ENCODE measurements at regions of chr2 and their contacts with region 1.

Region 1: GRCh38 chr2:27281855-27282559 is at the start of gene TRIM54:
- DNase-seq: no peak
- ATAC-seq: no peak
- H3K4me3 ChIP-seq: no peak within 1 kb of the TSS
- H3K4me3 Mint-ChIP-seq: no peak within 1 kb of the TSS
- H3K27ac ChIP-seq: no peak within 1 kb of the TSS
- H3K27ac Mint-ChIP-seq: no peak within 1 kb of the TSS
- H3K4me1 ChIP-seq: no peaks in the 10 kb centered on the region
- H3K4me1 Mint-ChIP-seq: no peaks in the 10 kb centered on the region
- H3K27me3 ChIP-seq: peaks cover 0 to 6% of the 10 kb centered on the region in 2 experiments
- H3K27me3 Mint-ChIP-seq: peaks cover 37% of the 10 kb centered on the region
- CTCF ChIP-seq: no peak
- total RNA-seq, gene TRIM54: not detected

Region 2: DNA sequence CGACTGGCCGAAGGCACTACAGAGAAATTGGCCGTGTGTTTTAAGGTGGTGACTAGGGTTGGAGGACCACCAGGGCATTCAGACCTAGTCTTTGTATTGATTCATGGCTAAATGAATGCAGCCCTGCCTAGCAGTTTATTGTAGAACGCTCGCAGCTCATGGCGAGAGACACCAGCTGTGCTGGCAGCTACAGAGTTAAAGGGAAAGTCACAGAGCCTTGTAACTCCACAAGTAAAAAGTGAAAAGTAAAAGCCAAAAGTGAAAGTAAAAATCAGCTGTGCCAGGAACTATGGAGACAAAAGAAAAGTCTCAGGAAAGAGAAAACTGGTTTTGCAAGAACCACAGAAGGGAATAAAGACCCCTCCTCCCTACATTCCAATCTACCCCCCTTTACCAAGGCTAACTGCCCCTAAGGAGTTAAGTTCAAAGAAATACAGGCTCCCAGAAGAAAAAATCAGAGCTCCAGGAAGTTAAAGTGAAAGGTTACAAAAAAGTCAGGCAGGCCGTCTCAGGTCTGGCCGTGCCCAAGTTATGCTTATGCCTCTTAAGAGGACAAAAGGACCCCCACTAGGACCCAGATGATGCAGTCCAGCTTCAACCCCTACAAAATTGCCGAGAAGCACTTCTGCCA is 982.4 kb before region 1 on chr2:
- CTCF ChIA-PET with region 1: no interaction called
- POLR2A ChIA-PET with region 1: no interaction called
- intact Hi-C with region 1: no loop called
- DNase-seq: peak in 8 of 14 experiments; percentile 9 to 62 (median 40)
- ATAC-seq: peak; percentile 46
- H3K4me3 ChIP-seq: peak overlapping the region; percentile 79
- H3K4me3 Mint-ChIP-seq: no peak overlapping the region
- H3K27ac ChIP-seq: peak overlapping the region; percentile 62 to 65
- H3K27ac Mint-ChIP-seq: no peak overlapping the region
- H3K4me1 ChIP-seq: peaks cover 24% of the 10 kb centered on the region
- H3K4me1 Mint-ChIP-seq: no peaks in the 10 kb centered on the region
- H3K27me3 ChIP-seq: no peaks in the 10 kb centered on the region
- H3K27me3 Mint-ChIP-seq: no peaks in the 10 kb centered on the region
- CTCF ChIP-seq: no peak

Region 3: GRCh38 chr2:26846328-26847306 is 435.4 kb before region 1 on chr2:
- CTCF ChIA-PET with region 1: no interaction called
- POLR2A ChIA-PET with region 1: no interaction called
- intact Hi-C with region 1: loop called in 1 of 2 experiments (anchors 10 kb)
- DNase-seq: peak; percentile 32 to 80 (median 49)
- ATAC-seq: peak; percentile 75
- H3K4me3 ChIP-seq: no peak overlapping the region
- H3K4me3 Mint-ChIP-seq: peak overlapping the region; percentile 87
- H3K27ac ChIP-seq: no peak overlapping the region
- H3K27ac Mint-ChIP-seq: no peak overlapping the region
- H3K4me1 ChIP-seq: peaks cover 36% of the 10 kb centered on the region
- H3K4me1 Mint-ChIP-seq: peaks cover 23% of the 10 kb centered on the region
- H3K27me3 ChIP-seq: peaks cover 46 to 69% of the 10 kb centered on the region in 2 experiments
- H3K27me3 Mint-ChIP-seq: peaks cover 71% of the 10 kb centered on the region
- CTCF ChIP-seq: peak; percentile 81

Region 4: GRCh38 chr2:27095745-27096651 is 186.0 kb before region 1 on chr2:
- CTCF ChIA-PET with region 1: interaction called, 9 read pairs
- POLR2A ChIA-PET with region 1: no interaction called
- intact Hi-C with region 1: loop called in 1 of 2 experiments (anchors 1 kb)
- DNase-seq: peak in 8 of 14 experiments; percentile 19 to 73 (median 46)
- ATAC-seq: peak; percentile 88
- H3K4me3 ChIP-seq: peak overlapping the region; percentile 23
- H3K4me3 Mint-ChIP-seq: peak overlapping the region; percentile 4
- H3K27ac ChIP-seq: no peak overlapping the region
- H3K27ac Mint-ChIP-seq: no peak overlapping the region
- H3K4me1 ChIP-seq: peaks cover 9% of the 10 kb centered on the region
- H3K4me1 Mint-ChIP-seq: peaks cover 11% of the 10 kb centered on the region
- H3K27me3 ChIP-seq: no peaks in the 10 kb centered on the region
- H3K27me3 Mint-ChIP-seq: no peaks in the 10 kb centered on the region
- CTCF ChIP-seq: no peak

Region 5: DNA sequence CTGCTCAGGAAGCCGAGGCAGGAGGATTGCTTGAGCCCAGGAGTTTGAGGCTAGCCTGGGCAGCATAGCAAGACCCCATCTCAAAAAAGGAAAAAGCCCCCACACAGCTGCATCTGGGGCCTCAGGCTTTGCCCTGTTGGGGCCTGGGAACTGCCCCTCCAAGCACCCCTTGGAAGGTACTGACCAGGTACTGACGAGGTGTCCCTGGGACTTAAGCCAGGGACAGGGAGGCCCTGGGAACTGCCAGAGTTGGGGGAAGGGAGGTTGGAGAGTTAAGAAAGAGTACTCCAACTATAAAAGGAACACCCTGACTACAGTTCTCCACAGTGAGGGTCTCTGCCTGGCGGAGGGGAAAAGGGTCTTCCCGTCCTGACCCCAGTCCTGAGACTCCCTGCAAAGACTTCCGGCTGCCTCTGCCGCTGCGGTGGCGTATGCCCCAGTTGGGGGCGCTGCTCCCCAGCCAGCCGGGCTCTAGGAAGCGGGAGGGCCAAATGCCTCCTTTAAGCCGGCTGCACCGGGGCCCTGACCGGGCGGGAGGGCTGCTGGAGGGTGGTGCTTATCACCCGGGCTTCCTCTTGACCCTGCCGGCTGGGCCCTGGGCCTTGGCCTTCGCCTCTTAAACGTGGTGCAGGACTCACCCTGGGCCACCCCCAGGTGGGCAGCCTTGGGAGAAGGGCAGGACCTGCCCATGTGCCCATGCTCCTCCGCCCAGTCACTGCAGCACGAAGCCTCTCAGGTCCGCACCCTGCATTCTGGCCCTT is 31.9 kb before region 1 on chr2:
- CTCF ChIA-PET with region 1: interaction called, 3 read pairs
- POLR2A ChIA-PET with region 1: interaction called, 3 read pairs
- intact Hi-C with region 1: loop called in 1 of 2 experiments (anchors 1 kb)
- DNase-seq: peak; percentile 9 to 65 (median 40)
- ATAC-seq: peak; percentile 78
- H3K4me3 ChIP-seq: no peak overlapping the region
- H3K4me3 Mint-ChIP-seq: no peak overlapping the region
- H3K27ac ChIP-seq: no peak overlapping the region
- H3K27ac Mint-ChIP-seq: no peak overlapping the region
- H3K4me1 ChIP-seq: peaks cover 6% of the 10 kb centered on the region
- H3K4me1 Mint-ChIP-seq: no peaks in the 10 kb centered on the region
- H3K27me3 ChIP-seq: peaks cover 11 to 15% of the 10 kb centered on the region in 2 experiments
- H3K27me3 Mint-ChIP-seq: peaks cover 32% of the 10 kb centered on the region
- CTCF ChIP-seq: peak; percentile 46

Region 6: DNA sequence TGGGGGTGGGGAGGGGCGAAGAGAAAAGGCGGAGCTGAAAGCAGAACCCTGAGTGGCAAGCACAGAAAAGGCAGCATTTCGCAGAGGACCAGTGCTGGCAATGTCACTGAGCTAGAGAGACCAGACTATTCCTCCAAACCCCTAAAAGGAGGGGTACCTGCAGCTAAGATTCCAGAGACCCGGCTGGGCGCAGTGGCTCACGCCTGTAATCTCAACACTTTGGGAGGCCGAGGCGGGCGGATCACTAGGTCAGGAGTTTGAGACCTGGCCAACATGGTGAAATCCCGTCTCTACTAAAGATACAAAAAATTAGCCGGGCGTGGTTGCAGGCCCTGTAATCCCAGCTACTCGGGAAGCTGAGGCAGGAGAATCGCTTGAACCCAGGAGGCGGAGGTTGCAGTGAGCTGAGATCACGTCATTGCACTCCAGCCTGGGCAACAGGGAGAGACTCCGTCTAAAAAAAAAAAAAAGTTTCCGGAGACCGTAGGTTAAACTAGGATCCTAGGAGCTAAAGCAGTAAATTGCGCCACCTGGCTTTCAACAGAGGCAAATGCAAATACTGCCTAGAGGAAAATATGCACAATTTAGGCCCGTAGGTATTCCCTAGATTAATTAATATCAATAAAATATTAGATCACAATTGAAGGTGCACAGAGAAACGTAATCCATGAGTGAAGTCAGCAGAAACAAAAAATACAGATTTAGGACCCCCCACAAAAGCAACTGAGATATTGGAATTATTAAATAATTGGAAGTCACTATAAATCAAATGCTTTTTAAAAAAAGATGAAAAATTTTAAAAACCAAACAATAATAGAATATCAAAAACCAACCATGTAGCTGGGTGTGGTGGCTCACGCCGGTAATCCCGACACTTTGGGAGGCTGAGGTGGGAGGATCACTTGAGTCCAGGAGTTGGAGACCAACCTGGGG is 21.4 kb after region 1 on chr2:
- CTCF ChIA-PET with region 1: interaction called, 12 read pairs
- POLR2A ChIA-PET with region 1: no interaction called
- intact Hi-C with region 1: no loop called
- DNase-seq: peak in 6 of 14 experiments; percentile 7 to 75 (median 65)
- ATAC-seq: peak; percentile 76
- H3K4me3 ChIP-seq: peak overlapping the region; percentile 39
- H3K4me3 Mint-ChIP-seq: peak overlapping the region; percentile 84
- H3K27ac ChIP-seq: no peak overlapping the region
- H3K27ac Mint-ChIP-seq: peak overlapping the region; percentile 45
- H3K4me1 ChIP-seq: peaks cover 20% of the 10 kb centered on the region
- H3K4me1 Mint-ChIP-seq: peaks cover 10% of the 10 kb centered on the region
- H3K27me3 ChIP-seq: peaks cover 23 to 26% of the 10 kb centered on the region in 2 experiments
- H3K27me3 Mint-ChIP-seq: peaks cover 44% of the 10 kb centered on the region
- CTCF ChIP-seq: peak; percentile 97

Region 7: DNA sequence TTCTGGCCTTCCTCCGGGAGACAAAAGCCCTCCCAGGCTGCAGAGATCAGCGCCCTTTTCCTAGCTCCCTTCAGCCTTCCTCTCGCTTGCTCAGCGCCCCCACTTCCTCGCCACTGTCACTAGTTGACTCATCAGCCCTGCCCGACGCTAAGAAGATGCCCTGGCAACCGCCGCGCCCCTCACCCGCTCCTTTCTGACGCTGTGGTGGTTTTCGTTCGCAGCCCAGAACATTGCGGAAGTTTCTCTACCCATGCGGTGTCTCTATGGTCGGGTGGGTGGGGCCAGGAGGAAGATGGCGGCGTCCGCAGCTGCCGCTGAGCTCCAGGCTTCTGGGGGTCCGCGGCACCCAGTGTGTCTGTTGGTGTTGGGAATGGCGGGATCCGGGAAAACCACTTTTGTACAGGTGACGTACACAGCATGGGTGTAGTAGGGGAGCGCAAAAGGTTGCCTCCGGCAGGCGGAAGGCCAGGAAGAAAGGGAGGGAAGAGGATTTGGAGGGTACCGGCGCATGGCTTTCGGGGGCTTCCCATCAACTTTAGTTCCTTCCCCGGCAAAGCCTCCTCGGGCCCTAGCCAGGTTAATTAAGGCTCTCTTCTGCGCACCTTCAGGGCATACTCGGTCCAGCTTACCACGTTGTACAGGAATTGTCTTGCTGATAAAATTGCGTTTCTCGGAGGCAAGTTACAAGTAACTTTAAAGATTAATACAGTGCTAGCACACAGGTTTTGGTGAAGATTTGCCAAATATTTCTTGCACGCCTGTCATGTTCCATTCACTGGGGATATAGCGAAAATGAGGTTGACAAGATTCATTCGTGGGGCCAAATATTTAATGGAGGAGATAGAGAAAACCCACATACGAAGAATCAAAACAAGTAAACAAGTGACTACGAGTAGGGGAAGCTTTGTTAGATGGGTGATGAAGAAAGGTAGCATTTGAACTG is 347.0 kb after region 1 on chr2 and contains the starts of genes CCDC121 and GPN1:
- CTCF ChIA-PET with region 1: no interaction called
- POLR2A ChIA-PET with region 1: no interaction called
- intact Hi-C with region 1: no loop called
- DNase-seq: peak; percentile 89 to 97 (median 94)
- ATAC-seq: peak; percentile 99
- H3K4me3 ChIP-seq: peak within 1 kb of the TSS; percentile 86
- H3K4me3 Mint-ChIP-seq: no peak within 1 kb of the TSS
- H3K27ac ChIP-seq: peak within 1 kb of the TSS; percentile 72 to 78
- H3K27ac Mint-ChIP-seq: no peak within 1 kb of the TSS
- H3K4me1 ChIP-seq: peaks cover 21% of the 10 kb centered on the region
- H3K4me1 Mint-ChIP-seq: peaks cover 20% of the 10 kb centered on the region
- H3K27me3 ChIP-seq: no peaks in the 10 kb centered on the region
- H3K27me3 Mint-ChIP-seq: no peaks in the 10 kb centered on the region
- CTCF ChIP-seq: no peak
- total RNA-seq, gene CCDC121: 0.47 to 0.91 TPM
- total RNA-seq, gene GPN1: 24.6 to 28.1 TPM

Measured in CD4-positive, alpha-beta T cell (primary cell).